CD14-positive monocyte (primary cell): ENCODE measurements at regions of chr19 and their contacts with region 1.

Region 1: GRCh38 chr19:51607920-51608562 is 22.2 kb downstream of the SIGLEC5 start:
- DNase-seq: peak; percentile 79 to 86 (median 84)
- H3K4me3 ChIP-seq: no peak overlapping the region
- H3K4me3 Mint-ChIP-seq: no peak overlapping the region
- H3K27ac ChIP-seq: no peak overlapping the region
- H3K27ac Mint-ChIP-seq: no peak overlapping the region
- H3K4me1 ChIP-seq: peaks cover 0 to 10% of the 10 kb centered on the region in 2 donors
- H3K4me1 Mint-ChIP-seq: peaks cover 20% of the 10 kb centered on the region
- H3K27me3 ChIP-seq: peaks cover 2 to 17% of the 10 kb centered on the region in 2 donors
- H3K27me3 Mint-ChIP-seq: peaks cover 7 to 16% (median 11%) of the 10 kb centered on the region in 3 donors
- CTCF ChIP-seq: peak; percentile 91

Region 2: DNA sequence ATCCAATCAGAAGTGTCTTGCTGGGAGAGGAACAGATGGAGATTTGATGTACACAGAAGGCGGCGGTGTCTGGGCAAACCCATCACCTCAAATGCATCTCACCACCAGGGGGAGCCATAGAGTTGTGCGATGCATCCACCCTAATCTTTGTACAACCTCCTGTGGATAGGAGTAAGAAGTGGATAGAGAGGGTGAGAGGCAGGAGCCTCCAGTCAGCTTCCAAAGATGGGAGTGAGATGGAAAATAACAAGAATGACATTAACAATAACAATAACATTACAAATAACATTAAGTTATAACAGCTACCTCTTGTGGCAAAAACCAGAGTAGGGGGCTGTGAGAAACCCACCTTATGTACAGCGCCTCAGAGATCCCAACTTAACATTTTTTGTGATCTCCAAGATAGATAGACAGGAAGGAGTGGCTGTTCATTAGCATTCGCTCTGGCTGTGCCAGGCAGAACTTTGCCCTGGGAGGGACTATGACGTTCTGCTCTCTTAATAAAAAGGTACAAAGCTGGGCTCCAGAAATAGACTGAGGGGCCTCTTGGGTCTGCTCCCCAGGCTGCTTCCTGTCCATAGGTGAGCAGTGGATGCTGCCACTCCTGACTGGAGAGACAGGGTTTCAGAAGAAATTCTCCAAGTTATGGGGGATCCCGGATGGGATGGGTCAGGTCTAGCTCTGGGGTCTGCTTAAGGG is 134.9 kb before region 1 on chr19:
- intact Hi-C with region 1: loop called in 1 of 2 experiments (anchors 5 kb)
- DNase-seq: peak; percentile 76 to 80 (median 78)
- H3K4me3 ChIP-seq: no peak overlapping the region
- H3K4me3 Mint-ChIP-seq: no peak overlapping the region
- H3K27ac ChIP-seq: no peak overlapping the region
- H3K27ac Mint-ChIP-seq: no peak overlapping the region
- H3K4me1 ChIP-seq: peaks cover 5 to 6% of the 10 kb centered on the region in 2 donors
- H3K4me1 Mint-ChIP-seq: peaks cover 10% of the 10 kb centered on the region
- H3K27me3 ChIP-seq: no peaks in the 10 kb centered on the region
- H3K27me3 Mint-ChIP-seq: peaks cover 14 to 25% (median 17%) of the 10 kb centered on the region in 3 donors
- CTCF ChIP-seq: peak; percentile 94

Region 3: DNA sequence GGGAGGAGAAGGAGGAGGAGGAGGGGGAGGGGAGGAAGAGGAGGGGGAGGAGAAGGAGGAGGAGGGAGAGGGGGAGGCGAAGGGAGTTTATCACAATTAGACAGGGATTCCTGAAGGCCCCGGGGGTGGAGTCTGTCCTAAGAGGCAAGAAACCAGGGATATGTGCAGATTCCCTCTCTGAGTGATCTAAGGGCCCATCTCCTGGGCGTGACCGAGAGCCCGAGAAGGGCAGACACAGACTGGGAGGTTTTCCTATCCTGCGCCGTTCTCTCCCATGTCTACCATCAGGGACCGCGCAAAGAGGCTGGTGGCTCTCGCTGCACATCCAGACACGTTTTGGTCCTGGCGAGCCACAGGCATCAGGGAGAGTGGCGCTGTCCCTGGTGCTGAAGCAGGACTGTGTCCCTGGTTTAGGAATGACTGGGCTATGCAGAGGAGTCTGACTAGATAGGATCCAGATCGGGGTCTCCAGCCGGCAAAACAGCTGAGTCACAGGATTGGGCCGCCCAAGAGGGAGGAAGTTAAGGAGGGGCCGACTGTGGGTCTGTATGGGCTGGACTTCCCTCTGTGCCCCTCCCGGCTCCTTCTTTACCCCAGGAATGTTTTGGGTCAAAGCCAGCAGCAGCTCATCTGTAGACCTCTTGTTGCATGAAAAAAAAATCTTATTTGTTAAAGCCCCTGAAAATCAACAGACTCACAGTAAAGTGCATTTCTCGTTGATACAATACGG is 54.9 kb before region 1 on chr19:
- intact Hi-C with region 1: loop called (anchors 5 to 10 kb)
- DNase-seq: peak; percentile 46 to 53 (median 51)
- H3K4me3 ChIP-seq: no peak overlapping the region
- H3K4me3 Mint-ChIP-seq: no peak overlapping the region
- H3K27ac ChIP-seq: no peak overlapping the region
- H3K27ac Mint-ChIP-seq: no peak overlapping the region
- H3K4me1 ChIP-seq: peaks cover 40 to 47% of the 10 kb centered on the region in 2 donors
- H3K4me1 Mint-ChIP-seq: peaks cover 47% of the 10 kb centered on the region
- H3K27me3 ChIP-seq: peaks cover 15 to 41% of the 10 kb centered on the region in 2 donors
- H3K27me3 Mint-ChIP-seq: peaks cover 39 to 57% (median 40%) of the 10 kb centered on the region in 3 donors
- CTCF ChIP-seq: no peak

Region 4: DNA sequence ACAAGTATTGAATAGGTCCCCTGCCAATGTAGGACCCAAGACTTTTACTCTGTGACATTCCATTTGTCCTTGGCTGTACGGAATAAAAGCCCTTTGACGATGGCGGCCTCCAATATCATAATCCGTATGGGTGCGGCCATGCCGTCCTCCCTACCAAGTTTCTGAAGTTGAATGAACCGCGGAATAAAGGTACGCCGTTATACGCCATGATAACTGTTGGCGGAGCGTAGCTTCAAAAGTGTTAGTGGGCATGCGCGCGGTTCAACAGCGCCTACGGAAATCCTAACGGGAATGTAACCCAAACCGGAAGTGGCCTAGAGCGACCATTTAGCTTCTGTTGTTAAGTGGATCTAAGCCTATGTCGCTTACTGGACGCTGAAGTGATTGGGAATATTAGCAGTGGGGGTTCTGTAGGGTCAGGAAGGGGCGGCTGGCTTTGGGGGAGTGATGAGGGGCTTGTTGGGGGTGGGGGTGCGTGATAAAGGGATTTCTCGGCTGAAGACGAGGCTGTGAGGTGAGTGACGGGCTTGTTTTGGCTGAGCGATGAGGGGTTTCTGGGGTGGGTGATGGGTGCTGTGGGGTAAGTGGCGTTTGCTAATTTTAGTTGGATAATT is 37.0 kb before region 1 on chr19 and contains the start of gene ZNF175:
- intact Hi-C with region 1: no loop called
- DNase-seq: peak; percentile 79 to 90 (median 88)
- H3K4me3 ChIP-seq: peak within 1 kb of the TSS; percentile 76 to 91 (median 84)
- H3K4me3 Mint-ChIP-seq: peak within 1 kb of the TSS; percentile 92 to 95
- H3K27ac ChIP-seq: peak within 1 kb of the TSS in 1 of 2 donors; percentile 32
- H3K27ac Mint-ChIP-seq: peak within 1 kb of the TSS in 6 of 7 donors; percentile 35 to 86 (median 44)
- H3K4me1 ChIP-seq: peaks cover 16 to 24% of the 10 kb centered on the region in 2 donors
- H3K4me1 Mint-ChIP-seq: peaks cover 25% of the 10 kb centered on the region
- H3K27me3 ChIP-seq: no peaks in the 10 kb centered on the region
- H3K27me3 Mint-ChIP-seq: peaks cover 0 to 5% (median 2%) of the 10 kb centered on the region in 3 donors
- CTCF ChIP-seq: no peak
- polyA plus RNA-seq, gene ZNF175: 0.39 to 2.4 (median 0.82) TPM

Region 5: GRCh38 chr19:51621178-51621577 is 13.1 kb after region 1 on chr19:
- intact Hi-C with region 1: no loop called
- DNase-seq: peak; percentile 70 to 87 (median 86)
- H3K4me3 ChIP-seq: peak overlapping the region in 1 of 3 experiments; percentile 6
- H3K4me3 Mint-ChIP-seq: no peak overlapping the region
- H3K27ac ChIP-seq: peak overlapping the region in 1 of 2 donors; percentile 50
- H3K27ac Mint-ChIP-seq: peak overlapping the region in 6 of 7 donors; percentile 5 to 78 (median 61)
- H3K4me1 ChIP-seq: peaks cover 25 to 47% of the 10 kb centered on the region in 2 donors
- H3K4me1 Mint-ChIP-seq: peaks cover 44% of the 10 kb centered on the region
- H3K27me3 ChIP-seq: no peaks in the 10 kb centered on the region
- H3K27me3 Mint-ChIP-seq: peaks cover 0 to 3% (median 0%) of the 10 kb centered on the region in 3 donors
- CTCF ChIP-seq: no peak

Region 6: GRCh38 chr19:51784922-51785690 is 177.1 kb after region 1 on chr19:
- intact Hi-C with region 1: loop called in 1 of 2 experiments (anchors 5 kb)
- DNase-seq: peak; percentile 98 to 99 (median 99)
- H3K4me3 ChIP-seq: no peak overlapping the region
- H3K4me3 Mint-ChIP-seq: no peak overlapping the region
- H3K27ac ChIP-seq: peak overlapping the region; percentile 50 to 98
- H3K27ac Mint-ChIP-seq: no peak overlapping the region
- H3K4me1 ChIP-seq: peaks cover 92 to 95% of the 10 kb centered on the region in 2 donors
- H3K4me1 Mint-ChIP-seq: peaks cover 52% of the 10 kb centered on the region
- H3K27me3 ChIP-seq: no peaks in the 10 kb centered on the region
- H3K27me3 Mint-ChIP-seq: peaks cover 0 to 1% (median 0%) of the 10 kb centered on the region in 3 donors
- CTCF ChIP-seq: no peak

Region 7: DNA sequence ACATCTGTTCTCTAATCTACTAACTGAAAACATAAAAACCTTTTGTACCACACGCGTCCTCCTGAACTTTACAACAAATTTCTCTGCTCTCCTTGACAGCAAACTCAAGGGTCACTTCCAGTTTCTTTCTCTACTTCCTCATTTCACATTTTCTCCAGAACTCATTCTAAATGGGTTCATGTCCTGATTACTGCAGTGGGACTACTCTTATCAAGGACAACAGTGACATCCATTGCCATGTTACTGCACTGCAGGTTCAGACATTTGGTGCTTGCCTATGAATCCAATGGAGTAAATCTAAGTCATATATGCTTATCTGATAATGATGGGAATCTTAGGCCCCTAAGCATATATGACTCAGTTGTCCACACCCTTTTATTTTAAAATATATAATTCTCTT is 222.2 kb after region 1 on chr19:
- intact Hi-C with region 1: loop called in 1 of 2 experiments (anchors 2 kb)
- DNase-seq: peak; percentile 85 to 92 (median 92)
- H3K4me3 ChIP-seq: peak overlapping the region in 1 of 3 experiments; percentile 33
- H3K4me3 Mint-ChIP-seq: peak overlapping the region in 1 of 2 donors; percentile 72
- H3K27ac ChIP-seq: peak overlapping the region in 1 of 2 donors; percentile 79
- H3K27ac Mint-ChIP-seq: peak overlapping the region; percentile 83 to 94 (median 89)
- H3K4me1 ChIP-seq: peaks cover 24 to 25% of the 10 kb centered on the region in 2 donors
- H3K4me1 Mint-ChIP-seq: peaks cover 30% of the 10 kb centered on the region
- H3K27me3 ChIP-seq: peaks cover 4% of the 10 kb centered on the region in 2 donors
- H3K27me3 Mint-ChIP-seq: peaks cover 2 to 12% (median 3%) of the 10 kb centered on the region in 3 donors
- CTCF ChIP-seq: peak; percentile 87